Prostate gland (tissue), 2 donors: ENCODE measurements at regions of chr13 and their contacts with region 1.

Region 1: DNA sequence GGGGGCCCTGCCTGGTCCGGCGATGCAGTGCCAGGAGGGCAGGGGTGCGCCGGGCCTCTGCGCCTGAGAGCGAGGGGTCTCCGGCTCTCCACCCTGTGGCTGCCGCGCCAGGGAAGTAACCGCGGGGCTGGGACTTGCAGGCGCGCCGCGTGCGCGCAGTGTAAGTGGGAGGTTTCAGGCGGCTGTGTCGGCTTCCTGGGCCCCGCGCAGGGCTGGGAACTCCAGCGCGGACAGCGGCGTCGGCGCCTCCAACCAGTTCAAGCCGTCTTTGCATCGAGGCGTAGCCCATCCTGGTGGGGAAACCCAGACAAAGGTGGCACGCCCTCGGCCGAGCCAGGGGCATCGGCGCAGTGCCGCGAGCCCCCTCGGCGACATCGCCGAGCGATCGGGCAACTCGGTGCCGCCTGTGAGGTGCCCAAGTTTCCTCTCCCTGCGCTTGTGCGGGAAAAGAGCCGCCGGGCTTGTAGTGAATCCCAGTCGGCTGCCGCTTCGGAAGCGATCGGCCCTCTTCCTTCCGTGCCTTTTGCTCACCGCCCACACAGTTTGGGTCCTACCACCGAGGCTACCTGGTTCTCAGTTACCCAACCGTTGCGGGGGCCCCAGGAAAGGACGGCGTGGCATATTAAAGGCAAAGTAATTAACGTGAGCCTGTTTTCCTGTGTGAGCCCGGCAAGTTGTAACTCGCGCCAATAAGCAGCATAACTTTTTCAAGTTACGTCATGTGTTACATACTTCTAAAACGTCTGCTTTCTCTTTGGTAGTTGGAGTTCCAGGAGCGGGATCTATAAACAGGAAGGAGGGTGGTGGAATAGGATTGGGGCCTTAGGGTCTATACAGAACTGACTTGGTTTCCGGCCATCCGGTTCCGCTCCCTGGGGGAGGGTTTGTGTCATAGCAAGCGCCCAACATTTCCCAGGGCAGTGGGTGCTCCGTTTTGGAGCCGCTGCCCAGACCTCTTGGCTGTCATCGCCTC is 1.2 kb downstream of the LRCH1 start:
- DNase-seq: peak; percentile 68
- H3K4me3 ChIP-seq: peak overlapping the region; percentile 69 to 77
- H3K27ac ChIP-seq: peak overlapping the region; percentile 86 to 93
- H3K4me1 ChIP-seq: no peaks in the 10 kb centered on the region
- H3K27me3 ChIP-seq: no peaks in the 10 kb centered on the region
- CTCF ChIP-seq: peak in 2 of 4 experiments; percentile 33 to 36
- POLR2A ChIP-seq: peak; percentile 35

Region 2: DNA sequence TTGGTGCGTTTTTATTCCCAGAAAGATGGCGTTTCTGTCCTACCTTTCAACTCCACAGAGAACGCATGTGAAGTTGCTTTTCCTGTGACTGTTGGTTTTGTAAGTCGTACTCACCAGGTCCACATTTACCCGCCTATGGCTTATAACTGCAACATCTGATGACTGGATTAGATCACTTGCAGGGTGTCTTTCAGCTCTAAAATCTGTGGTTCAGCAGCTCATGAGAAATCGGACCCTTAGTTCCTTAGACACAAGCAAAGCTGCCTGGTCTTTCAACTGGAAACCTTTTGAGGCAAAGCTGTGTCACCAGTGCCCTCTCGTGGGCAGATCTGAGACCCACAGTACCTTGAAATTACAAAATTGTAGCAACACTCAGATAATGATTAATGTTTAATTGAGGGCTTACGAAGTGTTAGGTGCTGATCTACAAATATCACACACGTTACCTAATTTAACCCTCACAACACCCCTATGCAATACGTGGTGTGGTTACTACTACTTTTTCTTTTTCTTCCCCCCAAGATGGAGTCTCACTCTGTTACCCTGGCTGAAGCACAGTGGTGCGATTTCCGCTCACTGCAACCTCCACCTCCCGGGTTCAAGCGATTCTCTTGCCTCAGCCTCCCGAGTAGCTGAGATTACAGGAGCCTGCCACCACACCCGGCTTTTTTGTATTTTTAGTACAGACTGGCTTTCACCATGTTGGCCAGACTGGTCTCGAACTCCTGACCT is 232.5 kb before region 1 on chr13:
- intact Hi-C with region 1: no loop called
- DNase-seq: peak; percentile 36
- H3K4me3 ChIP-seq: no peak overlapping the region
- H3K27ac ChIP-seq: no peak overlapping the region
- H3K4me1 ChIP-seq: no peaks in the 10 kb centered on the region
- H3K27me3 ChIP-seq: no peaks in the 10 kb centered on the region
- CTCF ChIP-seq: peak; percentile 33 to 63 (median 58)
- POLR2A ChIP-seq: no peak

Region 3: DNA sequence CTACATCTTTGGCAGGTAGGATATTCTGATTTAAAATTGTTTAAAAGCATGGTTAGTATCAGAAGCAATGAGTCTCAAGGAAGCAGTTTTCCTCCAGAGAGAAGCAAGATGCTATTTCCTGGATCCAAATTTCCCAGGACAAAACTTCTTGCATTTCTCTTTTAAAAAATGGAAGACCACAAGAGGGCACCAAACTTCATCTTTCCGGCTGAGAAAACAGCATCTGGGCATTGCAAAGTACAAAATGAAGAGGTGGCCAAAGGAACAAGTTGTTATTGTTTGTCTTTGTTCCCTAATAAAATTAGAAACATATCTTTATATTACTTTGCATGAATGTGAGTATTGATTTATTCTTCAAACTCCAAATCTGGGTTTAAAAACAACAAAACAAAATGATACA is 61.2 kb before region 1 on chr13:
- intact Hi-C with region 1: loop called (anchors 5 kb)
- DNase-seq: peak; percentile 46
- H3K4me3 ChIP-seq: no peak overlapping the region
- H3K27ac ChIP-seq: no peak overlapping the region
- H3K4me1 ChIP-seq: no peaks in the 10 kb centered on the region
- H3K27me3 ChIP-seq: no peaks in the 10 kb centered on the region
- CTCF ChIP-seq: peak in 3 of 4 experiments; percentile 58 to 74 (median 73)
- POLR2A ChIP-seq: no peak

Region 4: DNA sequence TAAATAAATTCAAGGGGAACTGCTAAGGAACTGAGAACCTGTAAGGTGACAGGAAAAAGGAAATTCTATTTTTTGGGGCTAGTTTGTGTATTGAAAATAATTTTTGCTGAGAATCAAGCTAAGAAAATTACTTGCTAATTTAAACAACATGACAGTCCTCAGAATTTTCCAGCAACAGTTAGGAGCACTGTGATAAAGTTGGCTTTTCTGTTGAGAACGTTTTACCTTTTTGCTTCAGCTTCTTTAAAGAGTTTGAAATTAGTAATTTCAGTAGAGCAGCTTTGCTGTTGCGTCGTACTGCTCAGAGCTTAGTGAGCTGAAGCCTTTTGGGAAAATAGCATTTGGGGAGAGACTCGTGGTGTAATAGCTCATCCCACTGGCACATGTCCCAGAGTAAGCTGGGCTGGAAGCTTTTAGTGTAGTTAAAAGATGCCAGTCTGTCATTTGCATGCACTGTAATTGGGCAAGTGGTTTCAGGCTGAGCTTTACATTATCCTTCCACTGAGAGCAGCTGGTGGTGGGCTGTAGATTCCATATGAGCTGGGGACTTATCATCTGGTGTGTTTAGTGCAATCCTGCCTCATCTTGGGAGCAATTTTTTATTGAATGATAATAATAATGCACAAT is 68.6 kb after region 1 on chr13:
- intact Hi-C with region 1: loop called (anchors 5 kb)
- DNase-seq: peak; percentile 18
- H3K4me3 ChIP-seq: no peak overlapping the region
- H3K27ac ChIP-seq: no peak overlapping the region
- H3K4me1 ChIP-seq: peaks cover 7% of the 10 kb centered on the region
- H3K27me3 ChIP-seq: no peaks in the 10 kb centered on the region
- CTCF ChIP-seq: no peak
- POLR2A ChIP-seq: no peak

Region 5: DNA sequence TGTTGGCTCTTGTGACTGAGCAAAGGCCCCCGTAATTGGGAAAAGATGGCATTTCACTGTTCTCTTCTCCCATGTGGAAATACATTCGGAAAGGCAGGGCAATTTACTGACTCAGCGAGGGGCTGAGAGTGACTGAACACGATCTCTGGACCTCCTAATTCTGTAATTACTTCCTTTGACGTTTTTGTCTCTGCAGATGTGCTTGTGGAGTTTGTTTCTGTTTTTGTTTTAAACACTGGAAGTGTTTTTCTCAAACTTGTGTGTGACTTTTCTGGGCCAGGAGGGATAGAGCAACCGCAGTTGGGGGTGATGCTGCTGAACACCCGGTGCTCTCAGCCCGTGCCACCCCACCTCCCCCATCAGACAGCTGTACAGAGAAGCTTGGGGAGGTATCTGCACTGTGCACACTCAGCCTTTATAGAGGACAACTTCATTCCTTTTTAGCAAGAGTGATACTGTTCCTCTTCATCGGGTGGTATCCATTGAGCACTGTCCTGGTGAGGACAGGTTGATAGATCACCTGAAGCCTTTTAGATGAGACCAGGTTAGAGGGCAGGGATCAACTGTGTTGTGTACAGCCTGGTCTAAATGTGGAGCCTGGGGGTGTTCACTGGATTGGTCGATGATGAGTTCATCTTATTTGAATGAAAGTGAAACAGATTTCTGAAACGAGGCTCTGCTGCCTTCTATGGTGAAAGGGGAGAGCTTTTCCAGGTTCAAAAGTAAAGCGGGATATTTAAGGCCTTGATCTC is 125.4 kb after region 1 on chr13:
- intact Hi-C with region 1: loop called (anchors 10 kb)
- DNase-seq: no peak
- H3K4me3 ChIP-seq: no peak overlapping the region
- H3K27ac ChIP-seq: peak overlapping the region; percentile 36 to 45
- H3K4me1 ChIP-seq: peaks cover 4% of the 10 kb centered on the region
- H3K27me3 ChIP-seq: no peaks in the 10 kb centered on the region
- CTCF ChIP-seq: no peak
- POLR2A ChIP-seq: no peak

Region 6: GRCh38 chr13:46721054-46721453 is 166.9 kb after region 1 on chr13:
- intact Hi-C with region 1: loop called (anchors 5 kb)
- DNase-seq: peak; percentile 42
- H3K4me3 ChIP-seq: no peak overlapping the region
- H3K27ac ChIP-seq: no peak overlapping the region
- H3K4me1 ChIP-seq: no peaks in the 10 kb centered on the region
- H3K27me3 ChIP-seq: no peaks in the 10 kb centered on the region
- CTCF ChIP-seq: peak; percentile 41 to 86 (median 66)
- POLR2A ChIP-seq: no peak

Region 7: DNA sequence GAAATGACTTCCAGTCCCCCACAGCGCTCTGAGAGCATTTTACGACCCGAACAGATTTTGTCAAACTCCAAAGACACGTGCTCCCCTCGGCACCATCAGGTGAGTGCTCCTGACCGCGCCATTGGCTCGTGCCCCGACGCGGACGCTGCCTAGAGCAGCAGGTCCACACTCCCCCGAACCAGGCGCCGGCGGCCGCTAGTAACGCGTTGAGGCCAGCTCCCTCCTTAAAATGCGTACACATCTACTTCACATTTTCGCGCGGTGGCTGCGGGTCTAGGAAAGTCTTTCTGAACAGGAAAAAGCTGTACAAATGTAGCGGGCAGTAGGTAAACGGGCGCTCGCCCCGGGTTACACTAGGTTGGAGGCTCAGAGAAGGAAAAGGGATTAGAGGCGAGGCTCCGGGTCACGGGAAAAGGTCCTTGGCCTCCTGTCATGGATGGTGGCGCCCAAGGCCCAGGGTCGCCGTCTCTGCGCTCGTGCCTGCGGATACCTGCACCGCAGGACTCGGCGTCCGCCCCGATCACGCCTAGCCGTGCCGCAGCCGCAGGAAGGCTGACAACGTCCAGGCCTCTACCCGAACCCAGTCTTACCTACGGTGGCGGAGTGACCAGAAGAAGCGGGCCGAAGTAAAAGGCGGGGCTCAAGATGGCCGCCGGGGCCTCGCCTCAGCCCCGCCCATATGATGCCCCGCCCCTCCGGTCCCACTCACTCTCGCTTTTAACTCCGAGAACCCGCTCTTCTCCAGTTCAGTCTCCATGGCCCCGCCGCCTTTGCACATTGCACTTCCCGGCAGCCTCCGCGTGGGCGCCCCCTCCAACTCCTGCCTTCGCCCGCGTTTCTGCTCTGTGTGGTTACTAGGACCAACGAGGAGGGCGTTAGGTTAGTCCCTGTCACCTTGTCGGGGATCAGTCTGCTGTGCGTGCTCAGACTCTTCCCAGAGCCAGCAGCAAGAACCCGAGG is 242.6 kb after region 1 on chr13 and contains the start of gene ESD:
- intact Hi-C with region 1: loop called (anchors 5 kb)
- DNase-seq: peak; percentile 92
- H3K4me3 ChIP-seq: peak within 1 kb of the TSS; percentile 69 to 80
- H3K27ac ChIP-seq: peak within 1 kb of the TSS; percentile 92 to 94
- H3K4me1 ChIP-seq: peaks cover 3% of the 10 kb centered on the region
- H3K27me3 ChIP-seq: no peaks in the 10 kb centered on the region
- CTCF ChIP-seq: no peak
- POLR2A ChIP-seq: peak; percentile 75
- total RNA-seq, gene ESD: 88.2 to 90.3 TPM